Panc1 (cell line): ENCODE measurements at regions of chr7 and their contacts with region 1.

Region 1: GRCh38 chr7:103593691-103594090 is 147.7 kb upstream of the SLC26A5 start:
- DNase-seq: no peak
- ATAC-seq: no peak
- H3K4me3 ChIP-seq: no peak overlapping the region
- H3K27ac ChIP-seq: no peak overlapping the region
- H3K4me1 ChIP-seq: no peaks in the 10 kb centered on the region
- H3K27me3 ChIP-seq: peaks cover 5% of the 10 kb centered on the region
- CTCF ChIP-seq: no peak

Region 2: GRCh38 chr7:103781409-103781808 is 187.7 kb after region 1 on chr7:
- CTCF ChIA-PET with region 1: no interaction called
- POLR2A ChIA-PET with region 1: interaction called, 14 read pairs
- in situ Hi-C with region 1: no loop called
- intact Hi-C with region 1: no loop called
- DNase-seq: no peak
- ATAC-seq: no peak
- H3K4me3 ChIP-seq: no peak overlapping the region
- H3K27ac ChIP-seq: no peak overlapping the region
- H3K4me1 ChIP-seq: no peaks in the 10 kb centered on the region
- H3K27me3 ChIP-seq: 0 out of 2 replicates have a peak, but pooled peaks cover 2% of the 10 kb centered on the region
- CTCF ChIP-seq: no peak

Region 3: DNA sequence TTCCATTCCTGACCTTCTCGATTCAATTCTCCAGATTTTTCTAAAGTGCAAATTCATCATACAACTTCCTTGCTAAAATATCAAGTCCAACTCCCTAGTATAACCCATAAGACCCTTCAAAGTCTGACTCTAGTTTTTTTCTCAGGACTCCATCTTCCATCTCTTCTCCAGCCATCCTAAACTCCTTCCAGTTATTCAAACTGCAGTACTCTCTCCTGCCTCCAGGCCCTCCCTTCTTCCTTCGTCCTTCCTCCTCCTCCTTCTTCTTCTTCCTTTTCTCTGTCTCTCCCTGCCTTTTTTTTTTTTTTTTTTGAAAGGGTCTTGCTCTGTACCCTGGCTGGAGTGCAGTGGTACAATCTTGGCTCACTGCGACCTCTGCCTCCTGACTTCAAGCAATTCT is 283.9 kb after region 1 on chr7:
- CTCF ChIA-PET with region 1: no interaction called
- POLR2A ChIA-PET with region 1: no interaction called
- in situ Hi-C with region 1: no loop called
- intact Hi-C with region 1: no loop called
- DNase-seq: no peak
- ATAC-seq: no peak
- H3K4me3 ChIP-seq: no peak overlapping the region
- H3K27ac ChIP-seq: no peak overlapping the region
- H3K4me1 ChIP-seq: no peaks in the 10 kb centered on the region
- H3K27me3 ChIP-seq: no peaks in the 10 kb centered on the region
- CTCF ChIP-seq: no peak